H1 (cell line): ENCODE measurements at regions of chr6 and their contacts with region 1.

Region 1: GRCh38 chr6:7992002-7992815 is 72.0 kb downstream of the BLOC1S5 start:
- DNase-seq: no peak
- H3K4me3 ChIP-seq: no peak overlapping the region
- H3K27ac ChIP-seq: no peak overlapping the region
- H3K4me1 ChIP-seq: no peaks in the 10 kb centered on the region
- H3K27me3 ChIP-seq: no peaks in the 10 kb centered on the region
- CTCF ChIP-seq: peak in 2 of 3 experiments; percentile 16 to 27; a peak in 2 of 4 replicates
- EP300 ChIP-seq: no peak
- POLR2A ChIP-seq: no peak
- RAD21 ChIP-seq: peak; percentile 55 to 62

Region 2: GRCh38 chr6:8006208-8006607 is 14.0 kb after region 1 on chr6:
- CTCF ChIA-PET with region 1: interaction called, 18 read pairs
- POLR2A ChIA-PET with region 1: no interaction called
- DNase-seq: no peak
- H3K4me3 ChIP-seq: no peak overlapping the region
- H3K27ac ChIP-seq: no peak overlapping the region
- H3K4me1 ChIP-seq: peaks cover 0 to 6% (median 0%) of the 10 kb centered on the region in 4 experiments; a peak in 1 of 7 replicates
- H3K27me3 ChIP-seq: peaks cover 0 to 1% (median 0%) of the 10 kb centered on the region in 4 experiments; a peak in 1 of 7 replicates
- CTCF ChIP-seq: peak in 1 of 3 experiments; percentile 16; a peak in 2 of 4 replicates
- EP300 ChIP-seq: no peak
- POLR2A ChIP-seq: no peak
- RAD21 ChIP-seq: peak; percentile 48

Region 3: GRCh38 chr6:8137529-8137939 is 145.3 kb after region 1 on chr6:
- CTCF ChIA-PET with region 1: no interaction called
- POLR2A ChIA-PET with region 1: no interaction called
- DNase-seq: no peak
- H3K4me3 ChIP-seq: no peak overlapping the region
- H3K27ac ChIP-seq: no peak overlapping the region
- H3K4me1 ChIP-seq: no peaks in the 10 kb centered on the region
- H3K27me3 ChIP-seq: no peaks in the 10 kb centered on the region
- CTCF ChIP-seq: no peak
- EP300 ChIP-seq: no peak
- POLR2A ChIP-seq: no peak
- RAD21 ChIP-seq: no peak